ENCODE measurements at regions of chr19 and their contacts with region 1.

Region 1: GRCh38 chr19:17069218-17069617 is 6.0 kb downstream of the HAUS8 start:
- DNase-seq: no peak
- H3K4me3 ChIP-seq: no peak overlapping the region
- H3K4me3 Mint-ChIP-seq: no peak overlapping the region
- H3K27ac ChIP-seq: no peak overlapping the region
- H3K27ac Mint-ChIP-seq: peak overlapping the region in 1 of 7 donors; percentile 8
- H3K4me1 ChIP-seq: peaks cover 28% of the 10 kb centered on the region
- H3K4me1 Mint-ChIP-seq: peaks cover 30 to 51% (median 39%) of the 10 kb centered on the region in 4 donors
- H3K27me3 ChIP-seq: no peaks in the 10 kb centered on the region
- H3K27me3 Mint-ChIP-seq: no peaks in the 10 kb centered on the region

Region 2: GRCh38 chr19:16771618-16772017 is 297.6 kb before region 1 on chr19:
- CTCF ChIA-PET with region 1: no interaction called
- POLR2A ChIA-PET with region 1: no interaction called
- intact Hi-C with region 1: loop called (anchors 5 kb)
- DNase-seq: peak; percentile 61 to 69 (median 63)
- H3K4me3 ChIP-seq: no peak overlapping the region
- H3K4me3 Mint-ChIP-seq: no peak overlapping the region
- H3K27ac ChIP-seq: no peak overlapping the region
- H3K27ac Mint-ChIP-seq: no peak overlapping the region
- H3K4me1 ChIP-seq: no peaks in the 10 kb centered on the region
- H3K4me1 Mint-ChIP-seq: peaks cover 0 to 2% (median 0%) of the 10 kb centered on the region in 4 donors
- H3K27me3 ChIP-seq: no peaks in the 10 kb centered on the region
- H3K27me3 Mint-ChIP-seq: peaks cover 16 to 18% of the 10 kb centered on the region in 2 donors

Region 3: DNA sequence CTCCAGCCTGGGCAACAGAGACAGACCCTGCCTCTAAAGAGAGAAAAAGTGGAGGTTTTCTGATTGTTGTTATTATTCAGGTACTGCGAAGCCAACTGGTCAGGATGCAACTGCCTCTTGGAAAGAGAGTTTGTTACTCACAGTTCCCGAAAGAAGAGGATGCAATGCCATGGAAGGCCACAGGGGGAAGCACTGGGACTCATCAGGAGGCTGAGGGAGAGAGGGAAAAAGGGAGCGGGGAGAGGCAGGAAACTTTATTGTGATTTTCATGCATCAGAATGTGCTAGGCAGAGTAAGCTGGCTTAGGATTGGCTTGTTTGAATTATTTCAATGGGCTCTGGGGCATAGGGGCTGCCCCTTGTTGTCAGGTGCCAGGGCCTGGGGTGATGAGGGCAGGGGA is 34.0 kb after region 1 on chr19:
- CTCF ChIA-PET with region 1: no interaction called
- POLR2A ChIA-PET with region 1: no interaction called
- intact Hi-C with region 1: no loop called
- DNase-seq: no peak
- H3K4me3 ChIP-seq: no peak overlapping the region
- H3K4me3 Mint-ChIP-seq: no peak overlapping the region
- H3K27ac ChIP-seq: no peak overlapping the region
- H3K27ac Mint-ChIP-seq: peak overlapping the region in 5 of 7 donors; percentile 48 to 87 (median 67)
- H3K4me1 ChIP-seq: peaks cover 5% of the 10 kb centered on the region
- H3K4me1 Mint-ChIP-seq: peaks cover 9 to 45% (median 32%) of the 10 kb centered on the region in 4 donors
- H3K27me3 ChIP-seq: no peaks in the 10 kb centered on the region
- H3K27me3 Mint-ChIP-seq: no peaks in the 10 kb centered on the region

Region 4: DNA sequence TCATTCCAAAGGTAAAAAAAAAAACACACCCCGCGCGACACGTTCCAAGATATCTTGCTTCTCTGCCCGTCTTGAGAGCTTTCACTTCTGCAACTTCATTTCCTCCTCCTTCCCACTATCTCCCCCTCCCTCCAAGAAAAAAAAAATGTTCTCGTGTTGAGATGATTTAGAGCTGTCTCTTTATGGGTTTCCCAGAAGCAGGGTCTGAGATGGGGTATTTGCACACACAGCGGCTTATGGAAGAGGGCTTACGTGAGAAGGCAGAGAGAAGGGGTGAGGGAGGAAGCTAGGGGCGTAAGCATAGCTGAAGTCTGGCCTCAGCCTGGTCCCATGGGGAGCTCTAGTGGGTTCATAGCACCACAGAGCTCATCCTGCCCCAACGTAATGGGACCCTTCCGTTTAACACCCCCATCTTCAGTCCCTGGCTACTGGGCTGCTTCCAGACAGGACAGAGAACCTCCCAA is 114.7 kb after region 1 on chr19:
- CTCF ChIA-PET with region 1: interaction called, 13 read pairs
- POLR2A ChIA-PET with region 1: interaction called, 11 read pairs
- intact Hi-C with region 1: loop called (anchors 1 kb)
- DNase-seq: peak in 4 of 5 donors; percentile 24 to 35 (median 31)
- H3K4me3 ChIP-seq: peak overlapping the region; percentile 5 to 43
- H3K4me3 Mint-ChIP-seq: peak overlapping the region; percentile 86 to 92 (median 90)
- H3K27ac ChIP-seq: peak overlapping the region; percentile 58
- H3K27ac Mint-ChIP-seq: peak overlapping the region; percentile 82 to 98 (median 96)
- H3K4me1 ChIP-seq: peaks cover 22% of the 10 kb centered on the region
- H3K4me1 Mint-ChIP-seq: peaks cover 16 to 27% (median 19%) of the 10 kb centered on the region in 4 donors
- H3K27me3 ChIP-seq: no peaks in the 10 kb centered on the region
- H3K27me3 Mint-ChIP-seq: no peaks in the 10 kb centered on the region

Region 5: DNA sequence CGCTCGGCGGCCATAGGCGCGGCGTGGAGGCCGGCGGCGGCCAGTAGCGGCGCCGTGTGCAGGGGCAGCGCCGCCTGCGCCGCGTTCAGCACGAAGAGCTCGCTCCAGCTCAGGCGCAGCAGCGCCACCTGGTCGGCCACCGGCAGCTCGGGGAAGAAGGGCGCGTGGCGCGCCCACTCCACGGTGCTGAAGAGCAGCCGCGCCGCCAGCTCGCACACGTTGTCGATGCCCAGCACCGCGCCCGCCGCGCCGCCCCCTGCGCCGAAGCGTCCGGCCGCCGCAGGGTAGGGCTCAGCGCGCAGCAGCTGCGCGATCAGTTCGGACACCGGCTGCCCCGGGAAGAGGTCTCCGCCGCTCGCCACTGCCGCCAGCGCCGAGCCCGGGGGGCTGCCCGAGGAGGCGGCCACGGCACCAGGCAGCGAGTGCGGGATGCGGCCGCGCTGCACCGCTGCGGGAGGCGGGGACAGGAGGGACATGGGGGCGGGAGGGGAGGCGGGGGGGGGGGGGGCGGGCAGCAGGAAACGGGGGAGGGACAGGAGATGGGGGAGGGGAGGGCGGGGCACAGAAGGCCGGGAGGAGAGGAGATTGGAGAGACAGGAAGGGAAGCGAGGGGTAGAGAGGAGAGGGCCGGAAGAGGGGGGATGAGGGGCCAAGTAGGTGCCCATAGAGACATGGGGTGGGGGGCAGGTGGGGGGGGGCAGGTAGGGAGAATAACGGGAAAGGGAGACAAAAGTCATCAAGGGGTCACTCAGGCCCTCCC is 166.6 kb after region 1 on chr19:
- CTCF ChIA-PET with region 1: interaction called, 18 read pairs
- POLR2A ChIA-PET with region 1: interaction called, 26 read pairs
- intact Hi-C with region 1: loop called (anchors 1 kb)
- DNase-seq: peak; percentile 71 to 77 (median 73)
- H3K4me3 ChIP-seq: peak overlapping the region; percentile 69 to 84
- H3K4me3 Mint-ChIP-seq: peak overlapping the region; percentile 70 to 85 (median 78)
- H3K27ac ChIP-seq: peak overlapping the region; percentile 40
- H3K27ac Mint-ChIP-seq: peak overlapping the region in 1 of 7 donors; percentile 64
- H3K4me1 ChIP-seq: peaks cover 20% of the 10 kb centered on the region
- H3K4me1 Mint-ChIP-seq: peaks cover 2 to 28% (median 6%) of the 10 kb centered on the region in 4 donors
- H3K27me3 ChIP-seq: no peaks in the 10 kb centered on the region
- H3K27me3 Mint-ChIP-seq: no peaks in the 10 kb centered on the region

Region 6: GRCh38 chr19:17260842-17261325 is 191.7 kb after region 1 on chr19:
- CTCF ChIA-PET with region 1: interaction called, 9 read pairs
- POLR2A ChIA-PET with region 1: no interaction called
- intact Hi-C with region 1: loop called (anchors 1 kb)
- DNase-seq: peak; percentile 85 to 88 (median 87)
- H3K4me3 ChIP-seq: no peak overlapping the region
- H3K4me3 Mint-ChIP-seq: no peak overlapping the region
- H3K27ac ChIP-seq: no peak overlapping the region
- H3K27ac Mint-ChIP-seq: peak overlapping the region in 5 of 7 donors; percentile 1 to 82 (median 47)
- H3K4me1 ChIP-seq: peaks cover 14% of the 10 kb centered on the region
- H3K4me1 Mint-ChIP-seq: peaks cover 5 to 22% (median 16%) of the 10 kb centered on the region in 4 donors
- H3K27me3 ChIP-seq: no peaks in the 10 kb centered on the region
- H3K27me3 Mint-ChIP-seq: no peaks in the 10 kb centered on the region

Region 7: DNA sequence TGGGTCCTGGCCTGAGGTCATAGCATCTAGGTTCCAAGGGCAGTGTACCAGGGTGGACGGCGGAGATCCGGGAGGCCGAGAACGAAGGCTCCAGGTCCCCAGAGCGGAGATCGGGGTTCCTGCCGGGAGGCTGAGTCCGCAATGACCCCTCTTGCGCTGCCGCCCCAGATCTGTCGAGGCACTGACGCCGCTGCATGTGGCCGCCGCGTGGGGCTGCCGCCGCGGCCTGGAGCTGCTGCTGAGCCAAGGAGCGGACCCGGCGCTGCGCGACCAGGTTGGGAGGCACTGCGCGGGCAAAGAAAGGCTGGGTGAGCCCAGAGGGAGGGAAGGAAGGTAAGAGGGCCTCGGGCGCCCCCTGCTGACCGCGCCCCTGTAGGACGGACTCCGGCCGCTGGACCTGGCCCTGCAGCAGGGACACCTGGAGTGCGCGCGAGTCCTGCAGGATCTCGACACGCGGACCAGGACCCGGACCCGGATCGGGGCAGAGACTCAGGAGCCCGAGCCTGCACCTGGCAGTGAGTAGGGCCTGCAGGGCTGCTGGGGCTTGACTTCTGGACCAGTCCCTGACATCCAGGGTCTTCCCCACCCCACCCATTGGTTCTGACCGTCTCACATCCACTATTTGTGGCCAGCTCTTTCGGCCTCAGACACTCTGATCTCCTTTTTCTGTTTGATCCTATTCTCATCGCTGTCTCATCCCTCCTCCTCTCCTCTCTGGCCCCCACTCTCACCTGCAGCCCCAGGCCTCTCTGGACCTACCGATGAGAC is 213.5 kb after region 1 on chr19:
- CTCF ChIA-PET with region 1: interaction called, 64 read pairs
- POLR2A ChIA-PET with region 1: interaction called, 3 read pairs
- intact Hi-C with region 1: loop called (anchors 1 kb)
- DNase-seq: peak; percentile 72 to 79 (median 74)
- H3K4me3 ChIP-seq: peak overlapping the region; percentile 17 to 45
- H3K4me3 Mint-ChIP-seq: peak overlapping the region; percentile 73 to 86 (median 80)
- H3K27ac ChIP-seq: no peak overlapping the region
- H3K27ac Mint-ChIP-seq: peak overlapping the region in 2 of 7 donors; percentile 24 to 42
- H3K4me1 ChIP-seq: peaks cover 17% of the 10 kb centered on the region
- H3K4me1 Mint-ChIP-seq: peaks cover 2 to 4% (median 3%) of the 10 kb centered on the region in 4 donors
- H3K27me3 ChIP-seq: no peaks in the 10 kb centered on the region
- H3K27me3 Mint-ChIP-seq: no peaks in the 10 kb centered on the region